Endothelial cell of umbilical vein (primary cell): ENCODE measurements at regions of chr6 and their contacts with region 1.

Region 1: DNA sequence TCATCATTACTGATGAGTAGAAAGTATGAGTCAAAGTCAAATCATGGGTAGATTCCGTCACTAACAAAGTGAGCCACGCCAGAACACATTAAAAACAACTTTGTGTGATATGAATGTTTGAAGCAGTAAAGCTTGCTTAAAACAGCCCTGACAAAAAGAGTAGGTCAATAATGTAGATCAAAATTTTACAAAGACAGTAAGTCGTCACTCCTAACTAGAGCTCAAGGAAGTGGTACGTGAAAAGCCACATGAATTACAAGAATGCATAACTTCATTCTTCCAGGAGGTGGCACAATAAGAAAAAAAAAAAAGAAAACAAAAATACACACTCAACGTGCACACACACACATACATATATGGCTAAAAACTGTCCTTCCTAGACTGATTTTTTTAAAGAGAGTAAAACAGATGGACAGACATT is 69.9 kb downstream of the HACE1 start:
- DNase-seq: peak; percentile 52
- H3K4me3 ChIP-seq: no peak overlapping the region
- H3K27ac ChIP-seq: no peak overlapping the region
- H3K4me1 ChIP-seq: peaks cover 6% of the 10 kb centered on the region
- H3K27me3 ChIP-seq: no peaks in the 10 kb centered on the region
- CTCF ChIP-seq: peak in 1 of 2 donors; percentile 24
- POLR2A ChIP-seq: no peak

Region 2: DNA sequence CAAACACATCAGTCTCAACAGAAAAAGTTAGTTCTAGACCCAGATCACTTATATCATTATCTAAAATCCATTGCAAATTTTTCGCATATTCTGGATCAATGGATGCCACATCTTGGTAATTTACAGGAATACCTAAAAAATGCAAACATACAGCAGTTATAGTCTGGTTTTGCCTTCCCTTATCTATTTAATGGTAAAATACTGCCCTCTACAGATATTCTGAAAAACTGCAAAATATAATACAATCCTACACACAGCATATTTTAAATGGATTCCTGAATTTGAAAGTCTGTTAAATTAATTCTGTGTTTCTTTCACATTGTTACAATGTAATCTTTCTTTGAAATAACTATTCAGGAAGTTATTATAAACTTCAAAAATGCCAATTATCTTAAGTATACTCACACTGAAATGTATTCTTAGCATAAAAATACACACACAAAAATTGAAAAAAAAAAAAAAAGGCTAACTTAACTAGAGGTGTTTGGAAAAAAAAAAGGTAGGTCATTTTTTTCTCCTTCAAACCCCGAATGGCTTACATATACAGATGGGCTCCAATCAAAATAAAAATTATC is 18.4 kb before region 1 on chr6:
- CTCF ChIA-PET with region 1: interaction called, 14 read pairs
- POLR2A ChIA-PET with region 1: no interaction called
- dilution Hi-C with region 1: no loop called
- intact Hi-C with region 1: no loop called
- DNase-seq: peak; percentile 51
- H3K4me3 ChIP-seq: no peak overlapping the region
- H3K27ac ChIP-seq: no peak overlapping the region
- H3K4me1 ChIP-seq: peaks cover 7% of the 10 kb centered on the region
- H3K27me3 ChIP-seq: no peaks in the 10 kb centered on the region
- CTCF ChIP-seq: peak; percentile 14 to 33
- POLR2A ChIP-seq: no peak

Region 3: DNA sequence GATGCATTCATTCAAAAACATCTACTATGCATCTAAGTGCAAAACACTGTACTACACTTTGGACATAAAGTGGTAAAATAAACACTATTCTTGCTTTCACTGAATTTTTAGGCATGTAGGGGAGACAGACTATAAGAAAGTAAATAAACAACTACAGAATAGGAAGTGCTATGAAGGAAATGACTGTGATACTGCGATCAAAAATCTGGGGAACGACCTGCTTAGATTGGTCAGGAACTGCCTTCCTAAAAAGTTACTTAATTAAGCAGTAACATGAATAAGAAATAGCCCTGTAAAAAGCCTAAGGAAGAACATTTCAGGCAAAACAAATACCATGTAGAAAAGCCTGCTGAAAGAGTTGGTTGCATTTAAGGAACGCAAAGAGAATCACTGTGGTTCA is 19.3 kb after region 1 on chr6:
- CTCF ChIA-PET with region 1: interaction called, 22 read pairs
- POLR2A ChIA-PET with region 1: no interaction called
- dilution Hi-C with region 1: no loop called
- intact Hi-C with region 1: no loop called
- DNase-seq: peak; percentile 57
- H3K4me3 ChIP-seq: no peak overlapping the region
- H3K27ac ChIP-seq: no peak overlapping the region
- H3K4me1 ChIP-seq: peaks cover 9% of the 10 kb centered on the region
- H3K27me3 ChIP-seq: no peaks in the 10 kb centered on the region
- CTCF ChIP-seq: no peak
- POLR2A ChIP-seq: no peak

Region 4: DNA sequence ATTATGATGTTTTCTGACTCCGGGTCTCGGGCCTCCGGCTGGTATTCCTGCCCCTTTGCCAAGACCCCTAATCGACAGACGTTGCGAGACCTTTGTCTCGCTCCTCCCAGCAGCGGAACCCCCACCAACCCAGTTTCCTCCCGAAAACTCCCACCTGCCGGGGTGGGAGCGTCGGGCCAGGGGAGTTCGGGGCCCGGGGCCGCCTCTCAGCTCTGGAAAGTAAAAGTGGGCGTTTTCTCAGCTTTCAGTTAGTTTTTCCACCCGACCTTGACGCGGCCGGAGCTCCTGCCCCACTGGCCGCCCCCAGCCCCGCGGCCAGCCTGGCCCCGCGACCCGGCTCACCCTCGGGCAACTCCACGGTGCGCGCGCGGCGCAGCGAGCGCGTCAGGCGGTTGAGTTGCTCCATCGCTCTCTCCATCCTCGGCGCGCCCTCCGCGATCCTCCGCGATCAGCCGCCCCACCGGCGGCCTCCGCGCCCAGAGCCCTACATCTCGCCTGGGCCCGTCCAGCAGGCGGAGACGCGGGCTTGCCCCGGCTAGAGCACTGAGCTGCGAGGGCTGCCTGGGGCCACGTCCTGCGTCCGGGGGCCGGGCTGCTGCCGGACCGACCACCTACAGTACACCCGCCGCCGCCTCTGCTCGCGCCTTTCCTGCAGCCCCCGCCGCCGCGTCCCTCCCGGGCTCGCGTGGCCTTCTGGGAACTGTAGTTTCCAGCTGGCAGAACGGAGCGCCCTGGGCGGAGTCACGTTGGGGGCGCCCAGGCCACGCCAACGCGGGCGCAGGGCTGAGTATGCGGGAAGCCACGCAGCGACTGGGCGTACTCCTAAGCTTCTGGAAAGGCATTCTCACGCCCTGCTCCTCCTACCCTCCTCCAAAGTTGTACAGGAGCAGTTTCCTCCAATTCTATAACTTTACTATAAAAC is 69.7 kb after region 1 on chr6 and contains the start of gene HACE1:
- CTCF ChIA-PET with region 1: interaction called, 10 read pairs
- POLR2A ChIA-PET with region 1: no interaction called
- dilution Hi-C with region 1: no loop called
- intact Hi-C with region 1: loop called (anchors 2 kb)
- DNase-seq: peak; percentile 93
- H3K4me3 ChIP-seq: peak within 1 kb of the TSS; percentile 57 to 87 (median 78)
- H3K27ac ChIP-seq: peak within 1 kb of the TSS; percentile 10
- H3K4me1 ChIP-seq: peaks cover 8% of the 10 kb centered on the region
- H3K27me3 ChIP-seq: no peaks in the 10 kb centered on the region
- CTCF ChIP-seq: peak; percentile 6 to 34
- POLR2A ChIP-seq: peak; percentile 49
- total RNA-seq, gene HACE1: 12.8 and 14.8 TPM in 2 replicates

Region 5: DNA sequence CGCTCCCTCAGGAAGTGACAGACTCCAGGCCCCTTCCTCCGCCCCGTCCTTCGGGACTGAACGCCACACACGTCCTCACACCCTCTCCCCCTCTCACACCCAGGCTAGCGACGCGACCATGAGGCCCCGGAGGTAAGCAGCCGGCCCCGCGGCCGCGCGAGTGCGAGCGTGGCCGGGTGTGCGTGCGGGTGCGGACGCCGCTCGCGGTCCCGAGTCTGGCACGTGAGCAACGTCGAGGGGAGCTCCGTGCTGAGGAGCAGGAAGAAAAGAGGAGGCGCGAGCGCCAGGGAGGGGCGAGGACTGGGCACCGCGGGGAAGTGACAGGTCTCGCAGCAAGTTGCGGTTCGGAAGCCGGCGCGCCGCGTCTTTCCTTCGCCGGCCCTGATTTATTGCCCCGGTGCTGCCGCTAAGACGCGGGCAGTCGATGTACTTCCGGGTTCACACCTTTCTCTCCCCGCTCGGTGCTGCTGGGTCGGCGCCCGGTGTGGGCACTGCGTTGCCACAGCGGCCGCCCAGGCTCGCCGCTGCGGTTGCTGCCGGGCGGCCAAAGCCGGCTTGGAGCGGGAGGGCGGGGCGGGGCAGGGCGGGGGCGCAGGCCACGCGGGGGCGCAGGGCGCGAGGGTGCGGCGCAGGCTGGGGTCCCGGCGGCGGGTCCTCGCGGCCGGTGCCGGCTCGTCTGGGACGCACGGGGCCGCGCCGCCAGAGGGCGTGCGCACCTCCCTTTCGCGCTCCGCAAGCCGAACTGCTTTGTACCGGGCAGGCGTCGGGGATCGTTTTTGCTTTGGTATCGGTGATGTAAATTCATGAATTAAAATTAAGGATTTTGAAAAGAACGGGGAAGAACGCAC is 151.3 kb after region 1 on chr6:
- CTCF ChIA-PET with region 1: interaction called, 3 read pairs
- POLR2A ChIA-PET with region 1: no interaction called
- dilution Hi-C with region 1: no loop called
- intact Hi-C with region 1: loop called (anchors 5 kb)
- DNase-seq: peak; percentile 33
- H3K4me3 ChIP-seq: peak overlapping the region; percentile 25 to 42 (median 38)
- H3K27ac ChIP-seq: no peak overlapping the region
- H3K4me1 ChIP-seq: peaks cover 4% of the 10 kb centered on the region
- H3K27me3 ChIP-seq: peaks cover 12 to 54% of the 10 kb centered on the region in 2 experiments
- CTCF ChIP-seq: peak; percentile 66 to 74
- POLR2A ChIP-seq: no peak

Region 6: DNA sequence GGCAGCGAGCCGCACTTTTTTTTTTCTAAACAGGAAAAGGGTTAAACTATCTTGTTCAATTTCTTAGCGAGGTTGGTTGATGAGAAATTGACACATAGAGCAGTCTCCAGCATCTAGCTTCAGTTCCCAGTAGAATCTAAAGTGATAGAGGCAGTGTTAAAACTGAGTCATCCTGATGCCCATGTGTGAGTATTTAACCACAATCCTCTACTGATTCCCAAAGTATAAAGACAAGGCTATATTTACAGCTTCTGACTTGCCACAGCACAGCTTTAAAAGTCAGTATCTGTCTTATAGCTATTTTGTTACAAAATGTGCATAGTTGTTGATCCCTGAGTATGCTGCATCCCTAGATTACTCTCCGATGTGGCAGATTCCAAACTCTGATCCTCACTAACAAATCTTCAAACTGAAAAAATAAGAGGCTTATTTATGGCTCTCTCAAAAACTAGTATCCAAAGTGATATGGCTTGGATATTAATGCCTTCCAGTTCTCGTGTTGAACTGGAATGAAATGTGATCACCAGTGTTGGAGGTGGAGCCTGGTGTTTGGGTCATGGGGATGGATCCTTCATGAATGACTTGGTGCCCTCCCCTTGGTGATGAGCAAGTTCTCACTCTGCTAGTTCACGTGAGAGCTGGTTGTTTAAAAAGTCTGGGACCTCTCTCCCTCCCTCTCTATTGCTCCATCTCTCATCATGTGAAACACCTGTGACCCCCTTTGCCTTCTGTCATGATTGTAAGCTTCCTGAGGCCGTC is 403.1 kb after region 1 on chr6:
- CTCF ChIA-PET with region 1: no interaction called
- POLR2A ChIA-PET with region 1: no interaction called
- dilution Hi-C with region 1: no loop called
- intact Hi-C with region 1: no loop called
- DNase-seq: no peak
- H3K4me3 ChIP-seq: no peak overlapping the region
- H3K27ac ChIP-seq: no peak overlapping the region
- H3K4me1 ChIP-seq: peaks cover 22% of the 10 kb centered on the region
- H3K27me3 ChIP-seq: no peaks in the 10 kb centered on the region
- CTCF ChIP-seq: no peak
- POLR2A ChIP-seq: no peak